ENCODE measurements at regions of chr17 and their contacts with region 1.

Region 1: DNA sequence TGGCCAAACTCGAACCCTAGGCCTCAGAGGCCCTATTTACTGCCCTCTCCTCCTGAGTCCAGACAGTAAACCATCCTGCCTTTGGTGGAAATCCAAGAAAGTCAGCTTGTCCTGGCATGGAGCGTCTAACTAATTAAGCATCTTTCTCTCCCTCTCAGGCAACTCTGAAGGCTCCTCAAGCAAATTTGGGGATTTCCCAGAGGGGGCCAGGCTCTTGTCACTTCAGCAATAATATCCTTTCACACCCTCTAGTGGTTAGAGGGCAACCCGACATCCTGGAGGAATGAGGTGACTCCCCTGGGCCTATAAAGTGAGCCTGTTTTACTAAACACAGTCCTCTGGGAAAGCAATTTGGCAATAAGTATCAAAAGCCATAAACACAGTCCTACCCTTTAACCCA is 60.4 kb downstream of the NOG start:
- DNase-seq: peak; percentile 45 to 86 (median 54)
- ATAC-seq: peak; percentile 100
- H3K4me3 ChIP-seq: no peak overlapping the region
- H3K4me3 Mint-ChIP-seq: no peak overlapping the region
- H3K27ac ChIP-seq: peak overlapping the region in 1 of 2 donors; percentile 31
- H3K27ac Mint-ChIP-seq: peak overlapping the region; percentile 10
- H3K4me1 ChIP-seq: peaks cover 5% of the 10 kb centered on the region
- H3K4me1 Mint-ChIP-seq: peaks cover 7% of the 10 kb centered on the region
- H3K27me3 ChIP-seq: no peaks in the 10 kb centered on the region
- H3K27me3 Mint-ChIP-seq: no peaks in the 10 kb centered on the region
- CTCF ChIP-seq: peak; percentile 62

Region 2: DNA sequence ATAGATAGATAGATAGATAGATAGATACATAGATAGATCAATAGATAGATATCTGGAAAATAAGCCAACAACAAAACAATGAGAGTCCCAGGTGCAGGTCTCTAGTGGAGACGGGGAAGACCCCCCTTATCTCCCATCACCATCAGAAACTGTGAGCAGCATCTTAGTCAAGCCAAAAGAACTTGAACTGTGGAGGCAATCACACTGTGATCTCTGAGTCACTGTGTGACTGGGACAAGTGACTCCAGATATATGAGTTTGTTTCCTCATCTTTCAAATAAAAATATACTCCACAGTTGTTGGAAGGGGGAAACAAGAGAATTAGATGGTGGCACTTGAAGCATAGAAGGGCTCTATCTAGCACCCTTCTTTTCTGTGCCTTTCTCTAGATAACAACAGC is 18.2 kb before region 1 on chr17:
- CTCF ChIA-PET with region 1: no interaction called
- POLR2A ChIA-PET with region 1: no interaction called
- intact Hi-C with region 1: loop called in 1 of 2 experiments (anchors 2 kb)
- DNase-seq: no peak
- ATAC-seq: no peak
- H3K4me3 ChIP-seq: no peak overlapping the region
- H3K4me3 Mint-ChIP-seq: no peak overlapping the region
- H3K27ac ChIP-seq: no peak overlapping the region
- H3K27ac Mint-ChIP-seq: no peak overlapping the region
- H3K4me1 ChIP-seq: peaks cover 4% of the 10 kb centered on the region
- H3K4me1 Mint-ChIP-seq: no peaks in the 10 kb centered on the region
- H3K27me3 ChIP-seq: no peaks in the 10 kb centered on the region
- H3K27me3 Mint-ChIP-seq: no peaks in the 10 kb centered on the region
- CTCF ChIP-seq: no peak

Region 3: DNA sequence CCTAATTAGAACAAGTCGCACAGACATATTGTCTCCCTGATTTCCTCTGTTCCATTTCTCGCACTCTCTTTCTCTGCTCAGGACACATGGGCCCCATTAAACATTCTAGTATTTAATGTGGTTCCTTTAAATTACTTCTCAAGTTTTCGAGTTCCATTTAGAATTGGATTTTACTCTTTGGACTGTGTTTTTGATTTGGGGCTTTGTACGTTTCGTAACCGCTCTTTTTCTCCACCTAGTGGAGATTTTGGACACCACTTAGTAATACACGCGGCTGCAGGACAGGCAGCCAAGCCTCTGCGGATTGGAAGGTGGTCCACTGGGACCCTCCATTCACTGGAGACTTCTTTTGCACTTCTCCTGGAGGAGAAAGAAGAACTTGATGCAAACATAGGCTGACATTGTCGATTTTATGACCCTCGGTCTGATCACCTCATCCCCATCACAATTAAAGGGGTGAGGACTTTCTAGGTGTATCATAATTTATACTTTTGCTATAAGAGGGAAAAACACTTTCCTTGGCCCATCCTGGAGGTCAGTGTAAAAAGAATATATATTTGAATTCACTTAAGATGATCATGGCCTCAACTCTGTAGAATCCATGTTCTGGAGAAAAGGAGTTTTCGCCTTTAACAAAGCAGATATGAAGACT is 25.4 kb after region 1 on chr17:
- CTCF ChIA-PET with region 1: no interaction called
- POLR2A ChIA-PET with region 1: no interaction called
- intact Hi-C with region 1: no loop called
- DNase-seq: peak in 4 of 14 experiments; percentile 19 to 55 (median 36)
- ATAC-seq: peak; percentile 60
- H3K4me3 ChIP-seq: peak overlapping the region; percentile 14
- H3K4me3 Mint-ChIP-seq: peak overlapping the region; percentile 86
- H3K27ac ChIP-seq: no peak overlapping the region
- H3K27ac Mint-ChIP-seq: no peak overlapping the region
- H3K4me1 ChIP-seq: peaks cover 35% of the 10 kb centered on the region
- H3K4me1 Mint-ChIP-seq: peaks cover 6% of the 10 kb centered on the region
- H3K27me3 ChIP-seq: peaks cover 29 to 54% of the 10 kb centered on the region in 2 experiments
- H3K27me3 Mint-ChIP-seq: peaks cover 68% of the 10 kb centered on the region
- CTCF ChIP-seq: peak; percentile 68

Region 4: DNA sequence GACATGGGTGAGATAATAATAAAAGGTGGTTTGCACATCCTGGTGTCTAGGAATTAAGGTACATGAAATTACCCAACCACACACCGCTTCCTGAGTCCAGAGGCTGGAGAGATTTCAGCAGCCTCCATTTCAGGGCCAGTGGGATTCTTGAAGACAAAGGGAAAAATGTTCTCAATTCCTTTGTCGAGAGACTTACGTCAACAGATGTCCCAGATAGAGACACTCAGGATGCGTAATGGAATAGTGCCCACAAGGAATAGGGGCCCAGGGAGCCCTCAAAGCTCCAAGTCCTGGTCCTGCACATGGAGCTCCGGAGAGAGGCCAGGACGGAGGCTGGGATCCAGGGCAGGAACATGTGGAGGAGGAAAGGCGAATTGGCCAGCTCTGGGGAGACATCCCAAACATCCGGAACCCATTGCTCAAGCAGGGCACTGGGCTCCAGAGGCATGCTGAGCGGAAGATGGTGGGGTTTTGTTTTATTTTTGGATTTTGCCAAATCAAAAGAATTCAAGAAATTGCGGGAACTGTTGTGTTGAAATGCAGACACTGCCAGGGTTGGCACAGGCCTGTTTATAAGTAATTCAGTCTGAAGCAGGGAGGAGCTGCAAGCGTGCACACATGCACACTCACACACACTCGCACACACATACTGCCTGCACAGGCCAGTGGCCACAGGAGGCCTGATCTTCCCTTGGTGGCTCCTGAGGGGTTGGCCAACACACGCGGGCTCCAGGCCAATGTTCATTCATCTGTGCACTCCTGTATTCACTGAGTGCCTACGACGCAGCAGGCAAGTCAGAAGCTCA is 36.8 kb after region 1 on chr17:
- CTCF ChIA-PET with region 1: no interaction called
- POLR2A ChIA-PET with region 1: no interaction called
- intact Hi-C with region 1: no loop called
- DNase-seq: no peak
- ATAC-seq: no peak
- H3K4me3 ChIP-seq: no peak overlapping the region
- H3K4me3 Mint-ChIP-seq: no peak overlapping the region
- H3K27ac ChIP-seq: no peak overlapping the region
- H3K27ac Mint-ChIP-seq: no peak overlapping the region
- H3K4me1 ChIP-seq: no peaks in the 10 kb centered on the region
- H3K4me1 Mint-ChIP-seq: no peaks in the 10 kb centered on the region
- H3K27me3 ChIP-seq: peaks cover 0 to 3% of the 10 kb centered on the region in 2 experiments
- H3K27me3 Mint-ChIP-seq: peaks cover 18% of the 10 kb centered on the region
- CTCF ChIP-seq: no peak

Region 5: DNA sequence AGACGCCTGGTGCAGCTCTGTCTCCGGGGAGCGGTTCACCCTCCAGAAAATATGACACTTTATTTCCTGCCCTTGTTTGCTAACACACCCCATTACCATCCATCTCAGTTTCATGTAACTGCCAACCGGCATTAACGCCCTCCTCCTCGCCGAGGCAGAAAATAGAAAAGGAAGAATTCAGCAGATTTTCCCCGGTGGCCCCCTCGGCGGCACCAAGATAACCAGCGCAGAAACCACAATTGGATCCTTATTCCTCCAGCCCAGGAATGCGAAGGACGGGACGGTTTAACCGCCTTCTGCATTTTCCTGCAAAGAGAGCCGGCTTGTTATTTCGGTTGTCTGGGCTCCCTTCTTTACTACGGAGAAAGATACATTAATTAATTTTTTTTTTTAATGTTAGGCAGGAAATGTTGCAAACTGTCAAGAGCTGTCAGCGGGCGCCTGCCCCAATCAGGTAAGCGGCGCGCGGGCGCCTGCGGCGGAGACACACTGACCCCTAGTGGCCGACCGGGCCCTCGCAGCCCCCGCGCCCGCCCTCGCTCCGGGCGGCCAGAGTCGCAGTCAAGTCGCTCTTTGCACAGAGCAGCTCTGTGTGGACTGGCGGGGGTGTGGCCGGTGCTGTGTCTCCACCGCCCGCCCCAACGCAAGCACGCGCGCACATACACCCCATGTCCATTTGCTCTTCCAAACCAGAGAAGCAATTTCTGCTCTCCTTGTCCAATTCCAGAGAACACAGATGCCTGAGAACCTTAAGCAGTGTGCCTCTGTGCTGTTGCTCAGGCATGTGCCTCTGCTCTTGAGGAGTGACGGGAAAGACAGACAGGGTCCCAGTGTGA is 126.2 kb after region 1 on chr17:
- CTCF ChIA-PET with region 1: interaction called, 4 read pairs
- POLR2A ChIA-PET with region 1: interaction called, 7 read pairs
- intact Hi-C with region 1: loop called (anchors 1 to 2 kb)
- DNase-seq: peak; percentile 75 to 93 (median 85)
- ATAC-seq: peak; percentile 95
- H3K4me3 ChIP-seq: peak overlapping the region; percentile 64
- H3K4me3 Mint-ChIP-seq: peak overlapping the region; percentile 90
- H3K27ac ChIP-seq: peak overlapping the region; percentile 71 to 77
- H3K27ac Mint-ChIP-seq: peak overlapping the region; percentile 97
- H3K4me1 ChIP-seq: peaks cover 22% of the 10 kb centered on the region
- H3K4me1 Mint-ChIP-seq: peaks cover 26% of the 10 kb centered on the region
- H3K27me3 ChIP-seq: no peaks in the 10 kb centered on the region
- H3K27me3 Mint-ChIP-seq: no peaks in the 10 kb centered on the region
- CTCF ChIP-seq: peak; percentile 97

Measured in CD4-positive, alpha-beta T cell (primary cell).